Activated B cell treated with CpG ODN at 0.5 μM for 24 hours (primary cell): ENCODE measurements at regions of chr11 and their contacts with region 1.

Region 1: GRCh38 chr11:96342961-96343711 is at the start of gene MAML2:
- DNase-seq: peak; percentile 72
- ATAC-seq: peak; percentile 88
- H3K4me3 Mint-ChIP-seq: peak within 1 kb of the TSS; percentile 98
- H3K27ac Mint-ChIP-seq: peak within 1 kb of the TSS; percentile 95
- H3K4me1 Mint-ChIP-seq: peaks cover 50% of the 10 kb centered on the region
- H3K27me3 Mint-ChIP-seq: no peaks in the 10 kb centered on the region
- CTCF ChIP-seq: no peak
- total RNA-seq, gene MAML2: 20.9 and 24.8 TPM in 2 replicates

Region 2: DNA sequence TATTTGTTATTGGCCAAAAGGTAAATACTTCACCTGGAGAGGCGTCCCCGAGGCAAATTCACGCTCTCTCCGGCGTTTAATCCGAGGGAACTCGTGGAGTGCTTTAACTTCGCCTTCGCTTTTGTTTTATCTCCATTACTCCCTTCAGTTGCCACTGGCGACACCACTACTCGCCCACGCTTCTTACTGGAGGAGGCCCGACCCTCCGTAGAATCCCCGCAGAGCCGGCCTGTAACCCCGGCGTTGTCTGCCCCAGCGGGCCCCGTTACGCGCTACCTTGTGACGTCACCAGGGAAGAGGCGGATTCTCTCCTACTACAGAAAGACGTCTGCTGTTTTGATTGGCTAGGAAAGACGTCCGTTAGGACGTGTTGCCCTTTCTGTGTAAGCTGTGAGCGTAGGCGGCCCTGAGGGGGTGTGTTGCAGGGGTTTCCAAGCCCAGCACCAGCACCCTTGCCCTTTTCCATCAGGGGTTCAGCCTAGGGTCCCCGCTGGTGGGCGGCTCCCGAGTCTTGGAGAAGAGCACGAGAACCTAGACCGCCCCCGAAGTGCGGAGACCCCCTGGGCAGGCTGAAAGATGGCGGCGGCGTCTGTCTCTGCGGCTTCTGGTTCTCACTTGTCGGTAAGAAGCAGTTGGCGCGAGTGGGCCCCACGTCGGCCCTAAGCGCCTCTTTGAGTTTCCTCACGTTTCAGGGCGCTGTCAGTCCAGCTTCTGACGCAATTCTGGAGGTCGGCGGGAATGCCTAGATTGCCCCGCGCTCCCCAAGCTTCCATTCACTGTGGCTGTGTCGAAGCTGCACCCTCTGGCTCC is 552.8 kb before region 1 on chr11 and contains the start of gene CEP57:
- CTCF ChIA-PET with region 1: no interaction called
- POLR2A ChIA-PET with region 1: interaction called, 9 read pairs
- intact Hi-C with region 1: loop called (anchors 1 kb)
- DNase-seq: peak; percentile 84
- ATAC-seq: peak; percentile 64
- H3K4me3 Mint-ChIP-seq: peak within 1 kb of the TSS; percentile 100
- H3K27ac Mint-ChIP-seq: peak within 1 kb of the TSS; percentile 100
- H3K4me1 Mint-ChIP-seq: peaks cover 47% of the 10 kb centered on the region
- H3K27me3 Mint-ChIP-seq: no peaks in the 10 kb centered on the region
- CTCF ChIP-seq: no peak
- total RNA-seq, gene CEP57: 52.6 and 53.7 TPM in 2 replicates

Region 3: DNA sequence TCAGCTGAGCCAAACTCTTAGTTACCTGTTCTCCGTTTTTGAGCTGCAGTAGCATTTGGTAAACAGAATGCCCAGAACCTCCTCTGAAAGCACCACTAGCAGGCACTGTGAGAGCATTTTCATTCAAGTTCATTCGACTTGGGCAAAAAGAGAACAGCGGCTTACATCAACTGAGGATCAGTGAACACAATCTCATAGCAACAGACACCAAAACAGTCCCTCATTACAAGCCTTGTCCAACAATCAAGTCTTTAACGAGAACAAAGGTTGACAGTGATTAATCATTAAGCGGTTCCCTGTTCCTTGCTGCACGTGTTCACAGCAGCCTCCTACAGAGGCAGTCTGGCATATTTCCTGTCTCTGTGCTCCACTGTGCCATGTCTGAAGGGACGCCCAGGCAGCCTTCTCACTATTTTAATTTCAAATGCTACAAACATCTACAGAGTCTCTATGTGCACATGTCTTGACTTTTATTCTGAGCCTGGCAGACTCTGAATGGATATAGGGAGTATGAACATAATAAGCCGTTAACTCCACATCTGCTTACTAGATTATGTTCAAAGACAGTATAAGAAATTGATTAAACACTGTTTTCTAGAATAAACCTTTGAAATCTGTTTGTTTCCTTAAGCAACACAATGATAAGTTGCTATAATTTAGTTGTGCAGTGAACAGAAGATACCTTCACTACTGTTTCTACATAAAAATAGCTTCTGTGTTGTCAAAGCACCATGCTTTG is 330.9 kb before region 1 on chr11:
- CTCF ChIA-PET with region 1: interaction called, 21 read pairs
- POLR2A ChIA-PET with region 1: interaction called, 7 read pairs
- intact Hi-C with region 1: loop called (anchors 1 kb)
- DNase-seq: peak; percentile 21
- ATAC-seq: peak; percentile 91
- H3K4me3 Mint-ChIP-seq: peak overlapping the region; percentile 46
- H3K27ac Mint-ChIP-seq: peak overlapping the region; percentile 85
- H3K4me1 Mint-ChIP-seq: peaks cover 44% of the 10 kb centered on the region
- H3K27me3 Mint-ChIP-seq: no peaks in the 10 kb centered on the region
- CTCF ChIP-seq: no peak

Region 4: GRCh38 chr11:96134602-96135001 is 208.5 kb before region 1 on chr11:
- CTCF ChIA-PET with region 1: interaction called, 9 read pairs
- POLR2A ChIA-PET with region 1: no interaction called
- intact Hi-C with region 1: loop called (anchors 2 kb)
- DNase-seq: no peak
- ATAC-seq: peak; percentile 69
- H3K4me3 Mint-ChIP-seq: no peak overlapping the region
- H3K27ac Mint-ChIP-seq: peak overlapping the region; percentile 73
- H3K4me1 Mint-ChIP-seq: peaks cover 47% of the 10 kb centered on the region
- H3K27me3 Mint-ChIP-seq: no peaks in the 10 kb centered on the region
- CTCF ChIP-seq: no peak

Region 5: DNA sequence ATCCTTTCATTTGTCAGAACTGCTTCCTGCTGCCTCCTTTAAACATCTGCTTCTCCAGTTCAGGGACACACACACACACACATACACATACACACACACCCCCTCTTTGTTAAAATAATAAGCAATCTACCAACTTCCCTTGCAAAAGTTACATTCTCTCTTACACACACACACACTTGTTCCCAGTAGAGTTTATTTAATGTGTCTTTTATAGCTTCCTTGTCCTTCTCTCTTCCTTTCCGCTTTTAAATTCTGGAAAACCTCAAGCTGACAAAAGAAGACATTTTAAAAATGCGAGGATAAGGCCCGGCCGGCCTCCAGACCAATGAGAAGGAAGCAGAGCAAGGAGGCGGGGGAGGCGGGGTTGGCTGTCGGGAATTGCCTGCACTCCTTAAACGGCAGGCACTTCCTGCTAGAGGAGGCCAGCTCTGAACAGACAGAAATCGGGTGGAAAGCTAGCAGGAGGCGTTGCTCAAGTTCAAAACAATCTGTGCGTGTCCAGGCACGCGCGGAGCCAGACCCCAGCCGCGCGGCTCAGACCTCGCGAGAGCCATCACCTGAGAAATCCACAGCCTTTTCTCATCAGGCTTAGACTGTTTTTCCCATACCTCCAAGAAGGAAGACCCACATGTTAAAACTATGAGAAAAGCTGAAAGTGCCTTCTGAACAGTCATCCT is 100.0 kb before region 1 on chr11:
- CTCF ChIA-PET with region 1: interaction called, 38 read pairs
- POLR2A ChIA-PET with region 1: interaction called, 65 read pairs
- intact Hi-C with region 1: loop called (anchors 1 kb)
- DNase-seq: peak; percentile 51
- ATAC-seq: peak; percentile 87
- H3K4me3 Mint-ChIP-seq: peak overlapping the region; percentile 90
- H3K27ac Mint-ChIP-seq: peak overlapping the region; percentile 95
- H3K4me1 Mint-ChIP-seq: peaks cover 53% of the 10 kb centered on the region
- H3K27me3 Mint-ChIP-seq: no peaks in the 10 kb centered on the region
- CTCF ChIP-seq: no peak

Region 6: GRCh38 chr11:96306933-96307775 is 36.0 kb before region 1 on chr11:
- CTCF ChIA-PET with region 1: interaction called, 7 read pairs
- POLR2A ChIA-PET with region 1: interaction called, 3 read pairs
- intact Hi-C with region 1: loop called (anchors 2 kb)
- DNase-seq: no peak
- ATAC-seq: no peak
- H3K4me3 Mint-ChIP-seq: no peak overlapping the region
- H3K27ac Mint-ChIP-seq: peak overlapping the region; percentile 2
- H3K4me1 Mint-ChIP-seq: peaks cover 56% of the 10 kb centered on the region
- H3K27me3 Mint-ChIP-seq: no peaks in the 10 kb centered on the region
- CTCF ChIP-seq: no peak